SK-N-SH (cell line): ENCODE measurements at regions of chr1 and their contacts with region 1.

Region 1: DNA sequence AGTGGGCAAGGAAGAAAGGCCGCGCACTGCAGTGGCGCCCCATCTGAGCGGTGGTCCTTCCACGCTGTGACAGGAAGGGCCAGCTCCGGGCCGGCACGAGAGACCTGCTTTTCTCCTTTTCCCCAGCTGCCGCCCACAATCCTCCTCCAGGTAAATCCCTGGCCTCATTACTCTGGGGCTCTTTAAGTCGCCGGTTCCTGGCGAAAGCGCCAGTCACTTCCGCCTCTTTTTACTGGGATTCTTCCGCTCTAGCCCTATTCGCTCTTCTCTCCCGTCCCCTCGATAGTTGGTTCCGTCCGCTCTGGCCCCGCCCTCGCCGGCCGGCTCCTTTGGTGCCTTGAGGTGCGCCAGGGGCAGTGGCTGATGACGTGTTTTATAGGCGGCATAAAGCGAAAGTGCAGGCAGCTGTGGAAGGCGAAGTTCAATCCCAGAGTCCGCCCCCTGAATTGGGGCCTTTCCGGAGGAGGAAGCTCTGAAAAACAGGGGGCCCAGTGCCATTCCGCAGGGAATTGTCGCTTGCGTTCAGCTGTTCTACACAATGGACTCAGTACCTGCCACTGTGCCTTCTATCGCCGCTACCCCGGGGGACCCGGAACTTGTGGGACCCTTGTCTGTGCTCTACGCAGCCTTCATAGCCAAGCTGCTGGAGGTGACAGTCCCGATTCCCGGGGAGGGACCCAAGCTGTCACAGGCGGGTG is 26.2 kb downstream of the MIA3 start:
- DNase-seq: peak; percentile 89
- H3K4me3 ChIP-seq: peak overlapping the region; percentile 99
- H3K27ac ChIP-seq: peak overlapping the region; percentile 89 to 93
- H3K4me1 ChIP-seq: peaks cover 0 to 9% of the 10 kb centered on the region in 2 experiments; a peak in 3 of 4 replicates
- H3K27me3 ChIP-seq: no peaks in the 10 kb centered on the region
- CTCF ChIP-seq: no peak
- EP300 ChIP-seq: peak; percentile 33 to 48; a peak in 2 of 4 replicates
- RAD21 ChIP-seq: no peak

Region 2: DNA sequence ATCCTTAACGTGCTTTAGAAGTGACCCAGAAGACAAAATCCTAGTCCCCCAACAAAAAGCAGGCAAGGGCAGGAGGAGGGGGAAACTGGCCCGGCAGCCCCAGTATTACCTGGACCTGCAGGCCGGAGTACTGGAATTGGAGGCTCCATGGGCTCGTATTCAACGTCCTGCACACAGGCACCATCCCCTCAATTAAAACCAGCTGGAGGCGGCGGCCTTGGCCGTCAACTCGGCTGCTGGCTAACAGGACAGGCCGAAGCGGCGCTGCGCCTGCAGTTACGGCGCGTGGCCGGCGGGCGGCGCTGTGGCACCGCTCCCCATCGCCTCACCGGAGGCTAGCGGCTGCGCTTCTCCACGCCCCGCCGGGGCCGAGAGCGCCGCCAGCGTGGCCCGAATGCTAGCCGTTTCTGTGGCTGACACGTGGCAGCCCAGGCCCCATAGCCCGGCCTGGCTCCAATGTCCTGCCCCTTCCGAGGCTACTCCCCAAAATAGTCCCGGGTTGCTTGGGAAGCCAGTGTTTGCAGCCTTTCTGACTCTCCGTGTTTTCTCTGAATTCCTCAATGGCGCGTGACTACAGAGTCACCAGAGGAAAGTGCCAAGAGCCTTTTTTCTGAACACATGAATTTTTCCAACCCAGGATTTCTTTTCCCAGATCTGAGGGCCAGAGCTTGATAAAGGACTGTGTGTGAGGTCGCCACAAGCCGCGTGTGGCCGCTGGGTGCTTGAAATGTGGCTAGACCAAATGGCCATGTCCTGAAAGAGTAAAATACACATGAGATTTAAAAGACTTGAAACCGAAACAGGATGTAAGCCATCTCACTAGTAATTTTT is 178.7 kb before region 1 on chr1:
- CTCF ChIA-PET with region 1: interaction called, 50 read pairs
- POLR2A ChIA-PET with region 1: interaction called, 4 read pairs
- DNase-seq: peak; percentile 96
- H3K4me3 ChIP-seq: peak overlapping the region; percentile 64 to 65
- H3K27ac ChIP-seq: peak overlapping the region; percentile 94 to 97
- H3K4me1 ChIP-seq: peaks cover 0 to 4% of the 10 kb centered on the region in 2 experiments; a peak in 2 of 4 replicates
- H3K27me3 ChIP-seq: no peaks in the 10 kb centered on the region
- CTCF ChIP-seq: peak; percentile 97
- EP300 ChIP-seq: no peak; a peak in 1 of 4 replicates
- RAD21 ChIP-seq: peak; percentile 95

Region 3: DNA sequence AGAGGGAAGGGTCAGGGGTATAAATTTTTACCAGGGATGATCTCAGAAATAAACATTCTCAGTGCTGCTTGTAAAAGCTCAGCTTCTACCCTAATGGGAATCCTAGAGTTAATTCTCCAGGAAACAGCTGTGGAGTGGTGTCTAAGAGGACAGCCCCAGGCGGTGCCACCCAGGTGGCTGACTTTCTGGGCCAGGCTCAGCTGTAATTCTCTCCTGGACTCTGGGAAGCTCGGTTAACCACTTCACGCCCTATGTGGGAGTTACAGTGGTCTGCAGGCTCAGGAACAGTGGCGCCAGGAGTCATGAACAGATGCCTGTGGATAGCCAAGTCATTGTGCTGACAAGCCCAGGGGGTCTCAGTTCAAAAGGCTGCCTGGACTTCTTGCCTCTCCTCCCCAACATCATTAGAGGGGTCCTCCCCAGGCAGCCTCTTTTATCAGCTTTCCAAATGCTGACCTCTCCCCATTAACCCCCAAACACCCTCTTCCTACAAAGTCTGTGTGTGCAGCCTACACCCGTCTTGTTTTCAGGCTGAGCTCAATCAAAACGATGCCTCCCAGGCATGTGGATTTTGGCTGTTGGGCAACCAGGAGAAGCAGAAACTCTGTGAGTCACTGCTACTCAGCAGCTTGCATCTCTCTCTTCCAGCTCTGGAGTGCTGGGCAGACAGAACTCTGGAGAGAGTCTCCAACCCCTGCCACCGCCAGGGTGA is 97.4 kb before region 1 on chr1:
- CTCF ChIA-PET with region 1: no interaction called
- POLR2A ChIA-PET with region 1: no interaction called
- DNase-seq: peak; percentile 66
- H3K4me3 ChIP-seq: peak overlapping the region in 1 of 2 experiments; percentile 16; a peak in 1 of 4 replicates
- H3K27ac ChIP-seq: peak overlapping the region; percentile 30 to 36; a peak in 3 of 4 replicates
- H3K4me1 ChIP-seq: peaks cover 0 to 19% of the 10 kb centered on the region in 2 experiments; a peak in 1 of 4 replicates
- H3K27me3 ChIP-seq: no peaks in the 10 kb centered on the region
- CTCF ChIP-seq: no peak
- EP300 ChIP-seq: peak in 1 of 2 experiments; percentile 5; a peak in 1 of 4 replicates
- RAD21 ChIP-seq: no peak

Region 4: GRCh38 chr1:222670110-222670509 is 26.0 kb after region 1 on chr1:
- CTCF ChIA-PET with region 1: no interaction called
- POLR2A ChIA-PET with region 1: no interaction called
- DNase-seq: no peak
- H3K4me3 ChIP-seq: no peak overlapping the region
- H3K27ac ChIP-seq: no peak overlapping the region
- H3K4me1 ChIP-seq: peaks cover 0 to 6% of the 10 kb centered on the region in 2 experiments; a peak in 2 of 4 replicates
- H3K27me3 ChIP-seq: no peaks in the 10 kb centered on the region
- CTCF ChIP-seq: no peak
- EP300 ChIP-seq: no peak
- RAD21 ChIP-seq: no peak

Region 5: DNA sequence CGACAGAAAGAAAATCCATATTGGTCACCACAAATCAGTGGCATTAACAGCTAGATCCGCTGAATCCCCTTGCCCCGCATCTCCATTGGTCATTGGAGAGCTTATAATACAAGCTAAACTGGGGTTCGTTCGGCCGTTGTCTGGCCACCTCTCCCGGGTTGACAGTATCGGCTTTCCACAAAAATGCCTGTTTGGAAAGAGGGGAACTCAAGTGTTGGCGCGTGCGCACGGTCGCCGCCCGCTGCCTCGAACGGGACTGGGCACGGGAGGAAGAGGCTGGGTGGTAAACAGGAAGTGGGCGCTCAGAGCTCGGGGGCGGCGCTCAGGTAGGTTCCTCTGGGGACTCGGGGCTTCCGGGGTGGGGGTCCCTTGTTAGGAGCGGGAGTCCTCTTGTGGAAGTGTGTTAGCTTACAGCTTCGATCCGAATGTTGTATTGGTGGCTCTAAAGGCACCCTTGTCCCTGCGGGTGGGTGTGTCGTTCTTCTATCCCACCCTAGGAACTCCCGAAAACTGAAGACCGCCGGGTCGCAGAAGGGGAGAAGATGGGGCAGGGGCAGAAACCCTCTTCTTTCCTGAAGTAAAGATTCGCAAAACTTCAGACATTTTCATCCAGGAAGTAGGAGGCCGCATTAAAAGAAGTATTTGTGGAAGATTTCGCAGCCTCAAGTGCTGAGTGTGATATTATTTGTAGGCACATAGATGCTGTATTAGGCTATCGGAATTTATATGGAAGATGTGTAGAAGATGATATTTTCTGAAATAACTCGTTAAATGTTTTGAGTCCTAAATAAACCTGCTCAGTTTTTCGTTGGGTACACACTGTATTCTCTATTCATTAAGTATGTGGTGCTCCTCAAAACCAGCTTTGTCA is 69.2 kb after region 1 on chr1:
- CTCF ChIA-PET with region 1: no interaction called
- POLR2A ChIA-PET with region 1: interaction called, 12 read pairs
- DNase-seq: peak; percentile 89
- H3K4me3 ChIP-seq: peak overlapping the region; percentile 72 to 91
- H3K27ac ChIP-seq: peak overlapping the region; percentile 93 to 99
- H3K4me1 ChIP-seq: peaks cover 0 to 11% of the 10 kb centered on the region in 2 experiments; a peak in 3 of 4 replicates
- H3K27me3 ChIP-seq: no peaks in the 10 kb centered on the region
- CTCF ChIP-seq: no peak
- EP300 ChIP-seq: no peak
- RAD21 ChIP-seq: 0 out of 2 replicates have a peak, but pooled peaks have one; percentile 4

Region 6: GRCh38 chr1:223052931-223053330 is 408.8 kb after region 1 on chr1:
- CTCF ChIA-PET with region 1: no interaction called
- POLR2A ChIA-PET with region 1: no interaction called
- DNase-seq: no peak
- H3K4me3 ChIP-seq: no peak overlapping the region
- H3K27ac ChIP-seq: no peak overlapping the region
- H3K4me1 ChIP-seq: no peaks in the 10 kb centered on the region
- H3K27me3 ChIP-seq: peaks cover 18% of the 10 kb centered on the region; the same call in 1 of the 2 replicates
- CTCF ChIP-seq: no peak
- EP300 ChIP-seq: no peak
- RAD21 ChIP-seq: no peak